ENCODE measurements at regions of chr3 and their contacts with region 1.

Region 1: GRCh38 chr3:111539351-111540331 is 2.4 kb upstream of the CD96 start:
- DNase-seq: peak; percentile 73
- H3K4me3 Mint-ChIP-seq: peak overlapping the region; percentile 53
- H3K27ac Mint-ChIP-seq: peak overlapping the region; percentile 79
- H3K4me1 Mint-ChIP-seq: peaks cover 63% of the 10 kb centered on the region
- H3K27me3 Mint-ChIP-seq: no peaks in the 10 kb centered on the region

Region 2: GRCh38 chr3:110070161-110070916 is 1469.3 kb before region 1 on chr3:
- CTCF ChIA-PET with region 1: no interaction called
- intact Hi-C with region 1: loop called (anchors 2 kb)
- DNase-seq: no peak
- H3K4me3 Mint-ChIP-seq: no peak overlapping the region
- H3K27ac Mint-ChIP-seq: no peak overlapping the region
- H3K4me1 Mint-ChIP-seq: peaks cover 12% of the 10 kb centered on the region
- H3K27me3 Mint-ChIP-seq: no peaks in the 10 kb centered on the region

Region 3: GRCh38 chr3:111260878-111261277 is 278.8 kb before region 1 on chr3:
- CTCF ChIA-PET with region 1: no interaction called
- intact Hi-C with region 1: loop called (anchors 1 kb)
- DNase-seq: no peak
- H3K4me3 Mint-ChIP-seq: no peak overlapping the region
- H3K27ac Mint-ChIP-seq: no peak overlapping the region
- H3K4me1 Mint-ChIP-seq: peaks cover 13% of the 10 kb centered on the region
- H3K27me3 Mint-ChIP-seq: peaks cover 2% of the 10 kb centered on the region

Region 4: DNA sequence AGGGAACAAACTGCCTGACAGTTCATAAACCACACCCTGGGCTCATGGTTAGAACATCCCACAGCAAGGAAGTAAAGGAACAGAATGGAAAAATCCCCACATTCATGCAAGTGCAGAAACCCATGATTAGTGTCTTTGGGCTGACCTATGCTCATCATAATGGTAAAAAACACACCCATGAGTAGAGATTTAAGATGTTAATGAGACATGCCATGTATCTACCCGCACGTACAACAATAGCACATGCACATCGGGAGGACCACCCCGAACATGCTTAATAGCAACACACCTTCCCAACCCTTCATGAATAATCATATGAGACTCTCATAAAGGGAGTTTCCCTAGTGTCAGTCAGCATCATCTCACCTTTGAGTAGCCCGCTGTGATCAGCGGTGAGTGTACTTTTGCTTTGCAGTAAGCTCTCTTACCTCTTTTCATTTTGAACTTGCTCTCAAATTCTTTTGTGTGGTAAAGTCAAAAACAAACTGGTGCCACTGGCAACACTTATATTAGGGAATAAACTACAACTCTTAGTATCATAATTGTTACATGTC is 32.3 kb after region 1 on chr3:
- CTCF ChIA-PET with region 1: interaction called, 14 read pairs
- intact Hi-C with region 1: loop called (anchors 1 kb)
- DNase-seq: peak; percentile 78
- H3K4me3 Mint-ChIP-seq: no peak overlapping the region
- H3K27ac Mint-ChIP-seq: peak overlapping the region; percentile 76
- H3K4me1 Mint-ChIP-seq: peaks cover 67% of the 10 kb centered on the region
- H3K27me3 Mint-ChIP-seq: no peaks in the 10 kb centered on the region

Region 5: DNA sequence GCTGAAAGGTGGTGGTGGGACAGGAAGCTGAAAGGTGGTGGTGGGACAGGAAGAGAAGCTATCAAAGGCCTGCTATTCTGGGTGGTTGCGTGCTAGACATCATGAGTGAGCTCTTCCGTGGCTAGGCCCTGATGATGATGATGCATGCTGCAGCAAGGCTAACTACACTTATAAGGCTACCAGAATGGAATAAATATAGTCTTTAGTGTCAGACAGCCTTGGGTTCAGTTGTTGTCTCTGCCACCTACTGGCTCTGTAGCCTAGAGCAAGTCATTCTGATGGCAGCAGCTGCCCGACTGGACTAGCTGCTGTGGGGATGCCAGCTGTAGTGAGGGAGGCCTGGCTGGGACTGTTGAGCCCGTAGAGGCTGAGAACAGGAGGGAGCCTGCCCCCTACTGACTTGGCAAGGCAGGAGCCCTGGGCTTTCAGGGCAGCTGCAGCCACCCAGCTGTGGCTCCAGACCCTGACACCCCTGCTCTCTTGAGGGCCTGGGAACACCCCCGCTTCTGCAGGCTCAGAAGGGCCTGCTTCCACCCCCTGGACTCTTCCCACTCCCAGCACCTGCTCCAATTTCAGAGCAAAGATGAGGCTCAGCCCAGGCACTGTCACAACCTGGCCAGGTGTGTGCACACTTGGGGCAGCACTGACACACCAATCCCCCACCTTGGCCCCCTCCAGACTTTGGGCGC is 76.9 kb after region 1 on chr3:
- CTCF ChIA-PET with region 1: interaction called, 16 read pairs
- intact Hi-C with region 1: loop called (anchors 1 kb)
- DNase-seq: peak; percentile 83
- H3K4me3 Mint-ChIP-seq: no peak overlapping the region
- H3K27ac Mint-ChIP-seq: peak overlapping the region; percentile 97
- H3K4me1 Mint-ChIP-seq: peaks cover 79% of the 10 kb centered on the region
- H3K27me3 Mint-ChIP-seq: no peaks in the 10 kb centered on the region

Region 6: GRCh38 chr3:112136959-112137693 is 597.5 kb after region 1 on chr3:
- CTCF ChIA-PET with region 1: no interaction called
- intact Hi-C with region 1: loop called (anchors 5 kb)
- DNase-seq: peak; percentile 81
- H3K4me3 Mint-ChIP-seq: no peak overlapping the region
- H3K27ac Mint-ChIP-seq: no peak overlapping the region
- H3K4me1 Mint-ChIP-seq: peaks cover 64% of the 10 kb centered on the region
- H3K27me3 Mint-ChIP-seq: no peaks in the 10 kb centered on the region

Measured in activated naive CD4-positive, alpha-beta T cell treated with anti-CD3 and anti-CD28 coated beads for 36 hours (primary cell).